ENCODE measurements at regions of chr15 and their contacts with region 1.

Region 1: GRCh38 chr15:64224511-64224910 is 61.7 kb upstream of the PPIB start:
- DNase-seq: no peak
- ATAC-seq: no peak
- H3K4me3 ChIP-seq: no peak overlapping the region
- H3K4me3 Mint-ChIP-seq: no peak overlapping the region
- H3K27ac ChIP-seq: no peak overlapping the region
- H3K27ac Mint-ChIP-seq: no peak overlapping the region
- H3K4me1 ChIP-seq: peaks cover 0 to 4% of the 10 kb centered on the region in 2 experiments
- H3K4me1 Mint-ChIP-seq: peaks cover 5 to 17% (median 11%) of the 10 kb centered on the region in 3 donors
- H3K27me3 ChIP-seq: no peaks in the 10 kb centered on the region
- H3K27me3 Mint-ChIP-seq: no peaks in the 10 kb centered on the region

Region 2: GRCh38 chr15:64197425-64197824 is 27.1 kb before region 1 on chr15:
- CTCF ChIA-PET with region 1: no interaction called
- POLR2A ChIA-PET with region 1: interaction called in 1 of 2 experiments, 14 read pairs
- DNase-seq: no peak
- ATAC-seq: no peak
- H3K4me3 ChIP-seq: no peak overlapping the region
- H3K4me3 Mint-ChIP-seq: no peak overlapping the region
- H3K27ac ChIP-seq: no peak overlapping the region
- H3K27ac Mint-ChIP-seq: no peak overlapping the region
- H3K4me1 ChIP-seq: no peaks in the 10 kb centered on the region
- H3K4me1 Mint-ChIP-seq: no peaks in the 10 kb centered on the region
- H3K27me3 ChIP-seq: no peaks in the 10 kb centered on the region
- H3K27me3 Mint-ChIP-seq: no peaks in the 10 kb centered on the region

Region 3: DNA sequence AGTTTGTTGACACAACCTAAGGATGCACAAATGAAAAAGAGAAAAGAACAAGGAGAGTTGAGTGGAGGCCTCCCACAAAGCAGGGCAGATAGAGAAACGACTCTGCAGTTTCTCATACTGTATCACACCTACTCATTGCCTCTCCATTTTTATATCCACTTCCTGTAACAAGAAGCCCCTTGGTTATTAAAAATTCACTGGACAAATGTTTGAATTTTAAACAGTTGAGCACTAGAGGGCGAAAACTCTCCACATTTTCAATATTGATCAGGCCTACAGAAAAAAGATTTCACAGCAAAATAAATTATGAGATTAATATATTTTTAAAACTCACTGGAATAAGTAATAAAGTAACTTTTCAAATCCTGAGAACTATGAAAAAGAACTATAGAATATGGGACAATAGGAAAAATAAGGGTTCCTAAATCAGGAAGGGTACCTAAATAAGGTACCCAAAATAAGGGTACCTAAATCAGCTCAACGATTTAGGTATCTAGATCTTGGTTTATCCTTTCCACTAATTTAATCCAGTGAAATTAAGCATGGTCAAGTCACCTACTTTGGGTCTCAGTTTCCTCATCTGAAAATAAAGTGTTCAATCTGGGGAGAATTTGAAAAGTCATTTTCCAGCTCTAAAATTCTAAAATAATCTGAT is 14.7 kb before region 1 on chr15:
- CTCF ChIA-PET with region 1: no interaction called
- POLR2A ChIA-PET with region 1: interaction called in 1 of 2 experiments, 10 read pairs
- DNase-seq: peak in 1 of 35 experiments; percentile 34
- ATAC-seq: no peak
- H3K4me3 ChIP-seq: no peak overlapping the region
- H3K4me3 Mint-ChIP-seq: no peak overlapping the region
- H3K27ac ChIP-seq: no peak overlapping the region
- H3K27ac Mint-ChIP-seq: no peak overlapping the region
- H3K4me1 ChIP-seq: no peaks in the 10 kb centered on the region
- H3K4me1 Mint-ChIP-seq: no peaks in the 10 kb centered on the region
- H3K27me3 ChIP-seq: no peaks in the 10 kb centered on the region
- H3K27me3 Mint-ChIP-seq: no peaks in the 10 kb centered on the region

Measured in T-cell (primary cell).